ENCODE measurements at regions of chr10 and their contacts with region 1.

Region 1: DNA sequence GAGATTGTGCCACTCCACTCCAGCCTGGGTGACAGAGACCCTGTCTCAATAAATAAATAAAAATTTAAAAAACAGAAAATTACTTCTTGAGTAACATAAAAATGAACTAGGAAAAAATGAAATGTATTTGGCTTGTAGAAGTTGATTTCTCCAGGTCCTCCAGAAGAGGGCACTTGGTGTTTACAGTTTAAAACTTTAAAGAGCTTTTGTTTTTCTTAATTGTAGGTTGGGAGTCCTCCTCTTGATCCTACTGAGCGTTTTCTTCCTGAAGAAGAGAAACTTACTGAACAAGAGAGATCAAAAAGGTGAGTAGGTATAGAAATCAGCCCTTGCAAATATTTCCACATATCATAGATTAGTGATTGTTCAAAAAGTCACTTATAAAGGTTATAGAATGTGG is 16.2 kb downstream of the KIFBP start:
- DNase-seq: no peak
- H3K4me3 ChIP-seq: no peak overlapping the region
- H3K27ac ChIP-seq: peak overlapping the region in 2 of 8 donors; percentile 24 to 26
- H3K4me1 ChIP-seq: peaks cover 0 to 15% (median 2%) of the 10 kb centered on the region in 6 donors
- H3K27me3 ChIP-seq: no peaks in the 10 kb centered on the region
- CTCF ChIP-seq: peak in 9 of 11 experiments; percentile 32 to 71 (median 61)
- POLR2A ChIP-seq: no peak

Region 2: DNA sequence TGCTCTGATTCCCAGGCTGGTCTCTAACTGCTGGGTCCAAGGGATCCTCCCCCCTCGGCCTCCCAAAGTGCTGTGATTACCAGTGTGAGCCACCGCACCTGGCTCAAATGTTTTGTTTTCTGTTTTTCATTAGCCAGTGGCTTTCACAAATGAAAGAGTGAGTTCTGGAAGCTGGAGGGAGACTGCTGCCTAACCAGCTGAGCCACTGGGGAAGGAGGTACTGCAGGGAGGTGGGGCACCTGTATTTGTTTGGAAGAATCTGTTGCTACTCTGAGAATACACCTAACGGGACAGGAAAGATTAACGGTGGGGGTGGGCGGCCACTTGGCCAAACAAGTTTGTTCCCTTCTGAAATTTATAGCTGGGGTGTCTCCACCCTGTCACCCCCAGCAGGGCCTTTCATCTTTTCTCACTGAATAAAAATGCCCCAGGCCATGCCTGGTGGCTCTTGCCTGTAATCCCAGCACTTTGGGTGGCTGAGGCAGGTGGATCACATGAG is 172.8 kb before region 1 on chr10:
- intact Hi-C with region 1: no loop called
- DNase-seq: peak; percentile 31
- H3K4me3 ChIP-seq: no peak overlapping the region
- H3K27ac ChIP-seq: no peak overlapping the region
- H3K4me1 ChIP-seq: peaks cover 0 to 10% (median 7%) of the 10 kb centered on the region in 6 donors
- H3K27me3 ChIP-seq: peaks cover 0 to 20% (median 0%) of the 10 kb centered on the region in 7 donors
- CTCF ChIP-seq: no peak
- POLR2A ChIP-seq: no peak

Region 3: GRCh38 chr10:69092959-69093850 is 88.4 kb after region 1 on chr10:
- intact Hi-C with region 1: loop called (anchors 5 kb)
- DNase-seq: peak; percentile 82
- H3K4me3 ChIP-seq: peak overlapping the region in 5 of 8 donors; percentile 2 to 76 (median 19)
- H3K27ac ChIP-seq: peak overlapping the region in 7 of 8 donors; percentile 90 to 98 (median 93)
- H3K4me1 ChIP-seq: peaks cover 5 to 98% (median 68%) of the 10 kb centered on the region in 6 donors
- H3K27me3 ChIP-seq: no peaks in the 10 kb centered on the region
- CTCF ChIP-seq: peak; percentile 67 to 93 (median 85)
- POLR2A ChIP-seq: no peak

Measured in spleen (tissue), 13 donors.